ENCODE measurements at regions of chr2 and their contacts with region 1.

Region 1: GRCh38 chr2:198293281-198293680 is 488.9 kb downstream of the PLCL1 start:
- DNase-seq: no peak
- ATAC-seq: no peak
- H3K4me3 ChIP-seq: no peak overlapping the region
- H3K27ac ChIP-seq: no peak overlapping the region
- H3K4me1 ChIP-seq: no peaks in the 10 kb centered on the region
- H3K27me3 ChIP-seq: no peaks in the 10 kb centered on the region
- CTCF ChIP-seq: no peak
- POLR2A ChIP-seq: no peak

Region 2: GRCh38 chr2:197804049-197804757 is 489.1 kb before region 1 on chr2 and contains the start of gene PLCL1:
- intact Hi-C with region 1: loop called (anchors 5 kb)
- DNase-seq: peak; percentile 87 to 94 (median 92)
- ATAC-seq: peak; percentile 98
- H3K4me3 ChIP-seq: peak within 1 kb of the TSS; percentile 34 to 77
- H3K27ac ChIP-seq: peak within 1 kb of the TSS in 3 of 4 donors; percentile 58 to 62 (median 59)
- H3K4me1 ChIP-seq: peaks cover 19% of the 10 kb centered on the region
- H3K27me3 ChIP-seq: no peaks in the 10 kb centered on the region
- CTCF ChIP-seq: peak in 4 of 7 experiments; percentile 3 to 42 (median 26)
- POLR2A ChIP-seq: peak in 2 of 3 donors; percentile 15 to 23
- total RNA-seq, gene PLCL1: 2.0 to 2.9 TPM

Measured in body of pancreas (tissue), 4 donors.